PC-3 (cell line): ENCODE measurements at regions of chr7 and their contacts with region 1.

Region 1: GRCh38 chr7:7761340-7761980 is 43.1 kb upstream of the RPA3 start:
- DNase-seq: peak; percentile 73
- ATAC-seq: peak; percentile 14
- H3K4me3 ChIP-seq: peak overlapping the region; percentile 68
- H3K27ac ChIP-seq: peak overlapping the region; percentile 86
- H3K4me1 ChIP-seq: peaks cover 35% of the 10 kb centered on the region
- H3K27me3 ChIP-seq: no peaks in the 10 kb centered on the region
- CTCF ChIP-seq: peak; percentile 67; the same call in 1 of the 2 replicates

Region 2: DNA sequence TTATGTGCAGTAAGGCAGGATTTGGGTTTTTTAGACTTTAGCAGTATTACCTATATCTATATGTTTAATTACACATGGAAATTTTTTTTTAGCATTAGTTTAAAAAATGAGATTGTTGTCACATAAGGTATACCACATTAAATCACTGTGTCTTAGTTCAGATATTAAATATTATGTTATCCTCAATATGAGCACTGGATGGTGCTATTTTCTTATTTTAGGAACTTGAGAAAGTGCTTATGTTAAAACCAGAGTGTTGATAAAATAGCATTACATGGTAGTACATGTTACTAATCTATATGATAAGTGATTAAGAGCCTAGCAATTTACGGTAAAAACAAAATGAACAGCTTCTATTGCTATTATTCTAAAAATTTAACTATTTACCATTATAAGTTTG is 166.0 kb before region 1 on chr7:
- CTCF ChIA-PET with region 1: interaction called, 3 read pairs
- POLR2A ChIA-PET with region 1: no interaction called
- intact Hi-C with region 1: loop called (anchors 1 kb)
- DNase-seq: peak; percentile 62
- ATAC-seq: peak; percentile 61
- H3K4me3 ChIP-seq: no peak overlapping the region
- H3K27ac ChIP-seq: no peak overlapping the region
- H3K4me1 ChIP-seq: no peaks in the 10 kb centered on the region
- H3K27me3 ChIP-seq: no peaks in the 10 kb centered on the region
- CTCF ChIP-seq: peak; percentile 63

Region 3: GRCh38 chr7:7732566-7733290 is 28.7 kb before region 1 on chr7:
- CTCF ChIA-PET with region 1: interaction called, 3 read pairs
- POLR2A ChIA-PET with region 1: no interaction called
- intact Hi-C with region 1: loop called (anchors 2 kb)
- DNase-seq: peak; percentile 42
- ATAC-seq: peak; percentile 64
- H3K4me3 ChIP-seq: no peak overlapping the region
- H3K27ac ChIP-seq: no peak overlapping the region
- H3K4me1 ChIP-seq: peaks cover 14% of the 10 kb centered on the region
- H3K27me3 ChIP-seq: no peaks in the 10 kb centered on the region
- CTCF ChIP-seq: no peak

Region 4: GRCh38 chr7:7772397-7772821 is 10.9 kb after region 1 on chr7:
- CTCF ChIA-PET with region 1: no interaction called
- POLR2A ChIA-PET with region 1: no interaction called
- intact Hi-C with region 1: no loop called
- DNase-seq: no peak
- ATAC-seq: no peak; the same call in 1 of the 2 replicates
- H3K4me3 ChIP-seq: no peak overlapping the region
- H3K27ac ChIP-seq: no peak overlapping the region
- H3K4me1 ChIP-seq: no peaks in the 10 kb centered on the region
- H3K27me3 ChIP-seq: no peaks in the 10 kb centered on the region
- CTCF ChIP-seq: no peak

Region 5: GRCh38 chr7:7959979-7960670 is 198.7 kb after region 1 on chr7:
- CTCF ChIA-PET with region 1: no interaction called
- POLR2A ChIA-PET with region 1: no interaction called
- intact Hi-C with region 1: loop called (anchors 1 kb)
- DNase-seq: no peak
- ATAC-seq: no peak
- H3K4me3 ChIP-seq: no peak overlapping the region
- H3K27ac ChIP-seq: no peak overlapping the region
- H3K4me1 ChIP-seq: peaks cover 30% of the 10 kb centered on the region
- H3K27me3 ChIP-seq: no peaks in the 10 kb centered on the region
- CTCF ChIP-seq: no peak

Region 6: DNA sequence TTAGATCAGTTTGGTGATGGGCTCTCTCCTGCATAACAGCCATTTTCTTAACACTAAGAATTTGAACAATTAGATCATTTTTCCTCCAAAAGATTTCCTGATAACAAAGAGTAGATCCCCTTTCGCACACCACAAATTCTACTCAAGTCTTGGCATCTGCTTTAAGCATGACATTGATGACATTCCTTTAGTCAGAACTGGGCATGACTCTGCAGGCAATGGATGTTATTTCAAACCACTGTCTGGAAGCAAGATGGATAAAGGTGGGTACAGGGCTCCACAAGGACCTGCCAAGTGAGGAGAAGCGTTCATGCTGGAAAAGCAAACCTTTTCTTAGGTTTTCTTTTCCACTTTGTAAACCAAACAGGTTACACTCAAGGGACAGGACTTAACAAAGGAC is 330.7 kb after region 1 on chr7:
- CTCF ChIA-PET with region 1: no interaction called
- POLR2A ChIA-PET with region 1: no interaction called
- intact Hi-C with region 1: loop called (anchors 5 kb)
- DNase-seq: no peak
- ATAC-seq: no peak
- H3K4me3 ChIP-seq: no peak overlapping the region
- H3K27ac ChIP-seq: no peak overlapping the region
- H3K4me1 ChIP-seq: no peaks in the 10 kb centered on the region
- H3K27me3 ChIP-seq: no peaks in the 10 kb centered on the region
- CTCF ChIP-seq: no peak

Region 7: DNA sequence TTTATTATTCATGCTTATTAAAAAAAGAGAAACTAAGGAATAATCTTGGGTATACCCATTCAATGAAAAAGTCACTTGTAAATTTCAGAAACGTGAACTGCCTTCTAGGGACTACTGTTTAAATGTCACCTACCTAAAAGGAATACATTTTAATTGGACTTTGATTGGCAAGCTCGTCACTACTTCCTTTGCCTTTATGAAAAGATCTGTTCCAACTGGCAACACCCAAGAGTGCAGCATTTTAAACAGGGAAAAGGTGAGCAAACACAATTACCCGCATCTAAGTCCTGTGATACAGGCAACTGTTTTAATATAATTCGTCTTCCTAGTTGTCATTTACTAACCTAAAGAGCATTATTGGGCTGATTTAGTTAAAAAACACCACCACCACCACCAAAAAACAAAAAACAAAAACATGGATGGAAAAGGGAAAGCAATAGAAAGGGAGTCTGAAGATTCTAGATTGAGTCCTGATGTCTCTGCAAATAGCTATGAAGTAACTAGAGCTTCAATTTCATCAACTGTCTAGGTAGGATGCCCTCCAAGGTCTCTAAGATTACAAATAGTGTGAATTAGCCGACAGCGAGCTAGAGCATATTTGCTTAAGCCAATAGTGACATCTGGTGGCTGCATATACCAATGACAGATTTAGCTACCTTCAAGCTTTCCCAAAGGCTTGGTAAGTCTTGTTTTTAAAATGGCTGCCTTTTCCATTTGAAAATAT is 534.3 kb after region 1 on chr7:
- CTCF ChIA-PET with region 1: no interaction called
- POLR2A ChIA-PET with region 1: no interaction called
- intact Hi-C with region 1: loop called (anchors 10 kb)
- DNase-seq: peak; percentile 86
- ATAC-seq: peak; percentile 99
- H3K4me3 ChIP-seq: no peak overlapping the region; the same call in 1 of the 2 replicates
- H3K27ac ChIP-seq: no peak overlapping the region
- H3K4me1 ChIP-seq: no peaks in the 10 kb centered on the region
- H3K27me3 ChIP-seq: no peaks in the 10 kb centered on the region
- CTCF ChIP-seq: peak; percentile 82